BJ (cell line): ENCODE measurements at regions of chr13 and their contacts with region 1.

Region 1: DNA sequence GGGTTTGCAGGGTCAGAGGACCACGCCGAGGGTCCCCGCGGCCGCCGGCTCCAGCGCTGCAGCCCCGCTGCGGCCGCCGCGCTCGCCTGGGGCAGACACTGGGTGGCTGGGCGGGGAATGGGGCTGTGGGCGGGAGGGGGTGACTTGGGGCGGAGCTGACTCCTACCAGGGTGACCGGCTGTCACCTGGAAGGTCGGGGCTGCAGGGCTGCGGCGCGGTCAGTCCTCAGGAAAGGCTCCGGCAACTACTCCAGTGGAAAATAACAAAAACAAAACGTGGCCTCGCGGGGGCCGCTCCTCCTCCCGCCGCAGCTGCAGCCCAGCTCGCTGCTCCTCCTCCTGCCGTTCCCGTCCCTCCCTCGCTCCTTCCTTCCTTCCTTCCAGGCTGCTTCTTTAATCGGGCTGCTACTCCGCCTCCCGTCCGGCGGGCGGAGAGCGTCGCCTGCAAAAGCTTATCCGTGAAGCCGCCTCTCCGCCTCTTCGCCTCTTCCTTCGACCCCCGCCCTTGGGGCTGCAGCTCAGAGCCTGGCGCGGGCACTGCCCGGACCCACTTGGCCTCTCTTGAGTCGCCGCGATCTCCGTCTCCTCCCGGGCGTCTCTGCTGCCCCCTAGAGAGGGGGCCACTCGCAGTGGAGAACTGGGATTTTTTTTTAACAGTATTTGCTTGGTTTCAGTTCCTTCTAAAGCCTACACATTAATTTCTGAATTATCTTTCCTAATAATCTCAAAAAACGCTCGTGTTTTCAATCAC is at the start of gene TBC1D4:
- DNase-seq: peak; percentile 62
- H3K4me3 ChIP-seq: peak within 1 kb of the TSS; percentile 77
- H3K27me3 ChIP-seq: no peaks in the 10 kb centered on the region
- CTCF ChIP-seq: peak; percentile 92
- polyA plus RNA-seq, gene TBC1D4: 12.7 and 16.4 TPM in 2 replicates

Region 2: DNA sequence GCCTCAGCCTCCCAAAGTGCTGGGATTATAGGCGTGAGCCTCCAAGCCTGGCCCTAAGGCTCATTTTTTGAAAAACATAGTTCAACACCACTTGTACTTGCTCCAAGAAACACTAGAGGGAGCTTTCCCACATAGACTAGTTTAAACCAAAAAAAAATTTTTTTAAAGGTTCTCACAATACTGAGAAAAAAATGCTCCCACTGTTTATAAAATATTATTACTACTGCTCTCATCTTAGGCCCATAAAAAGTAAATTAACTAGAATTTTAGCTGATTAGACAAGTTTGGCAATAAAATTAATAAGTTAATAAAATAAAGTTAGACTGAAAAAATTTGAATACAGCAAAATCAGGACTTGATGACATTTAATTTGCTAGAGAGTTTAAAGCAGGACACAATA is 109.7 kb before region 1 on chr13:
- CTCF ChIA-PET with region 1: interaction called, 33 read pairs
- POLR2A ChIA-PET with region 1: interaction called, 3 read pairs
- DNase-seq: no peak
- H3K4me3 ChIP-seq: no peak overlapping the region
- H3K27me3 ChIP-seq: no peaks in the 10 kb centered on the region
- CTCF ChIP-seq: peak; percentile 69

Region 3: DNA sequence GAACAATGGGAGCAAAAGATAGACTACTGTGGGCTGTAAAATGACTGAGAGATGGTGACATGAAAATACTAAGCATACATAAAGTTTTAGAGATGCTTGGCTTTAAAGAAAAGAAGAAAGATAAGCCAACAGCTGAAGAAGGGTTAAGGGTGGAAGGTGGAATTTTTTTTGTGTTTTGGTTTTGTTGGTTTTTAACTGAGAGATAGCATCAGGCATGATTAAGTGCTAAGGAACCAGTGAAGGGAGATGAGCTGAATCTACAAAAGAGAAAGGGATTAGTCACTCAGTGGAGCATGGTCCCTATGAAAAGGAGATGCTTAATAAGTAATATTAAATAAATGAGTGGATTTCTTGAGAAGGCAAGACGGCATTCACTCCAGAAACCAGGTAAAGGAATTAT is 12.2 kb after region 1 on chr13:
- CTCF ChIA-PET with region 1: interaction called, 10 read pairs
- POLR2A ChIA-PET with region 1: no interaction called
- DNase-seq: no peak
- H3K4me3 ChIP-seq: no peak overlapping the region
- H3K27me3 ChIP-seq: no peaks in the 10 kb centered on the region
- CTCF ChIP-seq: no peak